Common myeloid progenitor, CD34-positive (primary cell): ENCODE measurements at regions of chr17 and their contacts with region 1.

Region 1: DNA sequence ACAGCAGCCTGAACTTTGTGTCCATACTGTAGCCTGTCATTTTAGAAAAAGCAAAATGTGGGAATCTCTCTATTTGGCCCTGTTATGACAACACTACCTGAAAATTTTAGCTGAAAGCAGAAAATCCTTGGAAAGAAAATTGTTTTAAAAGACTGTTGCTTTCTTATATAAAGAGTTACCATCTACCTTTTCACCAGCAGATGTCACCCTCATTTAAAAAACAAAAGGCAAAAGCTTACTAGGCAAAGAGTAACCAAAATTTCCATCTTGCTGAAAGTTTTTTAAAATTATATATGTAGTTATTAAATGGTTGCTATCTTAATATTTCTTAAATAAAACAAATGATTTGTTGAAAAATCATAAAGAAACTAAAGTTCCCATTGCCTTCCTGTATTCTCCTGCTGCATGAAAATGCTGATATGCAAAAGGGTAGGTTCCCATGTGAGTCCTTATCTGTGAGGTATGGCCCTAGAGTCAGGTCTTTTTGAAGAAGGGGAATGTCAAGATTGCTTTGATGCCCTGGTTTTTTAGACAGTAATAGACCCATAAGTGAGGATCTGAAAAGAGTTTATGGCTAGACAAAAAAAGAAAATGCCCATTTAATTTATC is 61.0 kb downstream of the TNRC6C start:
- DNase-seq: peak; percentile 31 to 66 (median 62)
- H3K4me3 ChIP-seq: no peak overlapping the region
- H3K27ac ChIP-seq: no peak overlapping the region
- H3K4me1 ChIP-seq: no peaks in the 10 kb centered on the region
- H3K27me3 ChIP-seq: no peaks in the 10 kb centered on the region

Region 2: GRCh38 chr17:78041386-78042179 is 22.1 kb after region 1 on chr17:
- CTCF ChIA-PET with region 1: interaction called, 14 read pairs
- POLR2A ChIA-PET with region 1: no interaction called
- DNase-seq: no peak
- H3K4me3 ChIP-seq: peak overlapping the region in 6 of 7 experiments; percentile 16 to 74 (median 48)
- H3K27ac ChIP-seq: peak overlapping the region; percentile 48 to 68
- H3K4me1 ChIP-seq: peaks cover 0 to 2% (median 0%) of the 10 kb centered on the region in 4 experiments
- H3K27me3 ChIP-seq: no peaks in the 10 kb centered on the region